Calu3 (cell line): ENCODE measurements at regions of chr14 and their contacts with region 1.

Region 1: DNA sequence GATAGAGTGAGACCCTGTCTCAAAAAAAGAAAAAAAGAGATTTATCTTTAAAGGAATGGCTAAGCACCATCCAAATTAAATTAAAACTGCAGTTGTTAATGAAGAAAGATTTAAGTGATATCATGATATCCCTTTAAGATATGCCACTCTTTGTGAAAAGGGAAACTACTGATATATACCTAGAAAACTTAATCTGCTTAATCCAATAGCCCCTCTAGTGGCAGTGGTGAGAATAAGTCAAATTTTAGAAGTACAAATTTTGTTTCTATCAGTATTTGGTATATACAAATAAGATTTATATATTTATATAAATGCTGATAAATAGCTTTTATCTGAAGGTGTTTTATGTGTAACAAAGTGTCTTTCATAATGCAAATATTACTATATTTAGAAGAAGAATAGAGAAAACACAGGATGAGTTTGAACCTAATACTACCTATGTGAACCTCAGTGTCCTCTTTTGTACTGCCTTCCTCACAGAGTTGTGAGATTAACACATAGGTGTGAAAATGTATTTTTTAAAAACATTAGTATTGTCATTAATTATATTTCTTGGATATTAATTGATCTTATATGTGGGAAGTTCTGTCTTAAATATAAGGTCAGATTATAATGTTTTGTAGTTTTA is 51.4 kb upstream of the GARIN2 start:
- DNase-seq: no peak
- H3K4me3 Mint-ChIP-seq: no peak overlapping the region
- H3K27ac Mint-ChIP-seq: no peak overlapping the region
- H3K4me1 Mint-ChIP-seq: no peaks in the 10 kb centered on the region
- H3K27me3 Mint-ChIP-seq: no peaks in the 10 kb centered on the region
- CTCF ChIP-seq: peak; percentile 51

Region 2: GRCh38 chr14:66746316-66747006 is 391.4 kb before region 1 on chr14:
- CTCF ChIA-PET with region 1: no interaction called
- intact Hi-C with region 1: loop called (anchors 10 kb)
- DNase-seq: peak; percentile 58
- H3K4me3 Mint-ChIP-seq: peak overlapping the region; percentile 22
- H3K27ac Mint-ChIP-seq: no peak overlapping the region
- H3K4me1 Mint-ChIP-seq: peaks cover 9% of the 10 kb centered on the region
- H3K27me3 Mint-ChIP-seq: no peaks in the 10 kb centered on the region
- CTCF ChIP-seq: peak; percentile 45

Region 3: GRCh38 chr14:67228325-67228984 is 90.6 kb after region 1 on chr14:
- CTCF ChIA-PET with region 1: no interaction called
- intact Hi-C with region 1: no loop called
- DNase-seq: no peak
- H3K4me3 Mint-ChIP-seq: no peak overlapping the region
- H3K27ac Mint-ChIP-seq: peak overlapping the region; percentile 39
- H3K4me1 Mint-ChIP-seq: no peaks in the 10 kb centered on the region
- H3K27me3 Mint-ChIP-seq: no peaks in the 10 kb centered on the region
- CTCF ChIP-seq: no peak